Pancreas (tissue), 10 donors: ENCODE measurements at regions of chr1 and their contacts with region 1.

Region 1: DNA sequence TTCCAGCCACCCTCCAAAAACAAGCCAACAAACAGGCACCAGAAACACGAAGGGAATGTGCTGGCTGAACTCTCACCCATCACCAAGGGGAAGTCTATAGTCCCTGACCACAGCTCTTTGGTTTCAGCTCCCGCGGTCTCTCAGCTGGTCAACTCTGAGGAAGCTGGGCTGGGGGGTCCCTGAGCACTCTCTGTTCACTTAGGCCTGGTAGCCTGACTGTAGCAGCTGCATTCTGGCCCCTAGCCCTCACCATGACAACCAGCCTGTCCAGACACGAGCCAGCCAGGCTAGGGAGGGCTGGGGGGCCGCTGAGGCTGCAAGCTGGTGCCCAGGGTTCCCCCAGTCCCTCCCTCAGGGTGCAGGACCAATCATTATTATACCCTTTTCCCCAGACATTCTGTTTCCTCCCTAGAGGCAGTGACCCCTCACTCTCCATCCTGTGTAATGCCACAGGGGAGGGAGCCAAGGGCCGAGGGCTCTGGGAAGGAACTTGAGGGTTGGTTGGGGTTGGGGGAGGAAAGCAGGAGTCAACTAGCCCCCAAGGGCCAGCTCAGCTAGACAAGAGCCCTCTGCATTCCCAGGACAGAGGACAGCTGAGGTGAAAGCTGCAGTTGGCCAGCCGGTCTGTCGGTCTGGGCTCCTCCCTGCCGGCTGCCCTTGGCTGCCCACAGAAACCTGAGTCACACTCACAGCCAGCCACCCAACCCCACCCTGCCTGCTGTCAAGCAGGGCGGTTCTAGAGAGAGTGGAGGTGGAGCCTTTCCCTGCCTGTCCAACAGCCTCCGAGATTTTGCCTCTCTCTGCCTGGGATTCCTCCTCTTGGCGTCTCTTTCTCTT is 1.2 kb upstream of the TRAPPC3 start:
- DNase-seq: peak; percentile 84 to 97 (median 93)
- ATAC-seq: peak; percentile 77 to 84 (median 80)
- H3K4me3 ChIP-seq: no peak overlapping the region
- H3K27ac ChIP-seq: peak overlapping the region; percentile 89 to 93 (median 90)
- H3K4me1 ChIP-seq: peaks cover 10 to 28% (median 14%) of the 10 kb centered on the region in 3 donors
- H3K27me3 ChIP-seq: no peaks in the 10 kb centered on the region
- CTCF ChIP-seq: no peak

Region 2: DNA sequence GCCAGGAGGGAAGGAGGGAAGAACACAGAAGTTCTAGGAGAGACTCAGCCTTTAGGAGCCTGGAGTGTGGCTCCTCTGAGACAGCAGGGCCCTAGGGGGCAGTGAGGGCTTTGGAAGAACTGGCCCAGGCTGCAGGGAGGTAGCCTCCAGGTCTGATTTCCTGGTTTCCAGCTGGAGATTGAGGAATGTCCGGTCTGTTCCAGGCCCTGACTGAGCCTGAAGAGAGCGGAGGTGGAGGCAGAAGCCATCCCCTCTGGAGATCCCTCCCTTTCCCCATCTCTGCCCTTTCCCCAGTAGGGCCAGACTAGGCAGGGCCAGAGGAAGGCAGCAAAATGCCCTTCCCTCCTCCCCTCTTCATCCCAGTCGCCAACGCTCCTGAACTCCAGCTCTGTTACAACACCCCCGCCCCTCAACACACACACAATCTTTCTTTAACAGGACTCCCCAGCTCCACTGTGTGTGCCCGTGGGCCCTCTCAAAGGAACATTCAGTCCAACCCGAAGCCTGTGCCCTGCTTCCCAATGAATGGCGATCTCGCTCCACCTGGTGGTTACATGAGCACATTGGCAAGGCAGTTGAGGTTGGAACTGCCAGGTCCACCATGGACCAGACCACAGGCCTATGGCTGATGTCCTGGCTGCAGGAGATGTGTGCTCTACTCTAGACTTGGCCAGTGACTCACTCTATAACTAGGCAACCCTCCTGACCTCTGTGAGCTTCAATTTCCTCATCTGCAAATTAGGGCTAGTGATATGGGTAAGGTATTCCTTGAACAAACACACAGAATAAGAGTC is 37.5 kb after region 1 on chr1:
- intact Hi-C with region 1: loop called in 1 of 3 experiments (anchors 5 kb)
- DNase-seq: peak; percentile 77 to 91 (median 82)
- ATAC-seq: peak; percentile 96 to 99 (median 99)
- H3K4me3 ChIP-seq: no peak overlapping the region
- H3K27ac ChIP-seq: peak overlapping the region in 3 of 4 donors; percentile 44 to 59 (median 48)
- H3K4me1 ChIP-seq: no peaks in the 10 kb centered on the region
- H3K27me3 ChIP-seq: no peaks in the 10 kb centered on the region
- CTCF ChIP-seq: peak; percentile 66 to 86 (median 74)